ENCODE measurements at regions of chr10 and their contacts with region 1.

Region 1: GRCh38 chr10:100518761-100519241 is 860 bp downstream of the SEC31B start:
- DNase-seq: peak; percentile 76
- H3K4me3 Mint-ChIP-seq: no peak overlapping the region
- H3K27ac Mint-ChIP-seq: peak overlapping the region; percentile 11
- H3K4me1 Mint-ChIP-seq: peaks cover 12% of the 10 kb centered on the region
- H3K27me3 Mint-ChIP-seq: no peaks in the 10 kb centered on the region

Region 2: DNA sequence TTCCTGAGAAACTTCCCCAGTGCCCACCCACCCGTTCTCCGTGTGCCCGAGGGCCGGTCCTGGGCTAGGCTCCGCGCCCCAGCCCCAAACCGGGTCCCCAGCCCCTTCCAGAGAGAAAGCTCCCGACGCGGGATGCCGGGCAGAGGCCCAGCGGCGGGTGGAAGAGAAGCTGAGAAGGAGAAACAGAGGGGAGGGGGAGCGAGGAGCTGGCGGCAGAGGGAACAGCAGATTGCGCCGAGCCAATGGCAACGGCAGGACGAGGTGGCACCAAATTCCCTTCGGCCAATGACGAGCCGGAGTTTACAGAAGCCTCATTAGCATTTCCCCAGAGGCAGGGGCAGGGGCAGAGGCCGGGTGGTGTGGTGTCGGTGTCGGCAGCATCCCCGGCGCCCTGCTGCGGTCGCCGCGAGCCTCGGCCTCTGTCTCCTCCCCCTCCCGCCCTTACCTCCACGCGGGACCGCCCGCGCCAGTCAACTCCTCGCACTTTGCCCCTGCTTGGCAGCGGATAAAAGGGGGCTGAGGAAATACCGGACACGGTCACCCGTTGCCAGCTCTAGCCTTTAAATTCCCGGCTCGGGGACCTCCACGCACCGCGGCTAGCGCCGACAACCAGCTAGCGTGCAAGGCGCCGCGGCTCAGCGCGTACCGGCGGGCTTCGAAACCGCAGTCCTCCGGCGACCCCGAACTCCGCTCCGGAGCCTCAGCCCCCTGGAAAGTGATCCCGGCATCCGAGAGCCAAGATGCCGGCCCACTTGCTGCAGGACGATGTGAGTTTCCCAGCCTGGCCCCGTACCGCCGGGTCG is 171.8 kb before region 1 on chr10 and contains the start of gene SCD:
- CTCF ChIA-PET with region 1: interaction called, 17 read pairs
- POLR2A ChIA-PET with region 1: interaction called, 4 read pairs
- intact Hi-C with region 1: no loop called
- DNase-seq: peak; percentile 93
- H3K4me3 Mint-ChIP-seq: peak within 1 kb of the TSS; percentile 87
- H3K27ac Mint-ChIP-seq: peak within 1 kb of the TSS; percentile 81
- H3K4me1 Mint-ChIP-seq: peaks cover 39% of the 10 kb centered on the region
- H3K27me3 Mint-ChIP-seq: peaks cover 2% of the 10 kb centered on the region
- total RNA-seq, gene SCD: 156 to 158 TPM

Region 3: GRCh38 chr10:100438674-100439315 is 80.0 kb before region 1 on chr10:
- CTCF ChIA-PET with region 1: interaction called, 85 read pairs
- POLR2A ChIA-PET with region 1: no interaction called
- intact Hi-C with region 1: loop called (anchors 1 kb)
- DNase-seq: no peak
- H3K4me3 Mint-ChIP-seq: no peak overlapping the region
- H3K27ac Mint-ChIP-seq: no peak overlapping the region
- H3K4me1 Mint-ChIP-seq: peaks cover 2% of the 10 kb centered on the region
- H3K27me3 Mint-ChIP-seq: no peaks in the 10 kb centered on the region

Region 4: GRCh38 chr10:100529475-100530298 is 10.9 kb after region 1 on chr10 and contains the start of gene NDUFB8:
- CTCF ChIA-PET with region 1: interaction called, 47 read pairs
- POLR2A ChIA-PET with region 1: no interaction called
- intact Hi-C with region 1: no loop called
- DNase-seq: peak; percentile 92
- H3K4me3 Mint-ChIP-seq: peak within 1 kb of the TSS; percentile 100
- H3K27ac Mint-ChIP-seq: peak within 1 kb of the TSS; percentile 96
- H3K4me1 Mint-ChIP-seq: peaks cover 33% of the 10 kb centered on the region
- H3K27me3 Mint-ChIP-seq: no peaks in the 10 kb centered on the region
- total RNA-seq, gene NDUFB8: 390 to 404 TPM

Region 5: DNA sequence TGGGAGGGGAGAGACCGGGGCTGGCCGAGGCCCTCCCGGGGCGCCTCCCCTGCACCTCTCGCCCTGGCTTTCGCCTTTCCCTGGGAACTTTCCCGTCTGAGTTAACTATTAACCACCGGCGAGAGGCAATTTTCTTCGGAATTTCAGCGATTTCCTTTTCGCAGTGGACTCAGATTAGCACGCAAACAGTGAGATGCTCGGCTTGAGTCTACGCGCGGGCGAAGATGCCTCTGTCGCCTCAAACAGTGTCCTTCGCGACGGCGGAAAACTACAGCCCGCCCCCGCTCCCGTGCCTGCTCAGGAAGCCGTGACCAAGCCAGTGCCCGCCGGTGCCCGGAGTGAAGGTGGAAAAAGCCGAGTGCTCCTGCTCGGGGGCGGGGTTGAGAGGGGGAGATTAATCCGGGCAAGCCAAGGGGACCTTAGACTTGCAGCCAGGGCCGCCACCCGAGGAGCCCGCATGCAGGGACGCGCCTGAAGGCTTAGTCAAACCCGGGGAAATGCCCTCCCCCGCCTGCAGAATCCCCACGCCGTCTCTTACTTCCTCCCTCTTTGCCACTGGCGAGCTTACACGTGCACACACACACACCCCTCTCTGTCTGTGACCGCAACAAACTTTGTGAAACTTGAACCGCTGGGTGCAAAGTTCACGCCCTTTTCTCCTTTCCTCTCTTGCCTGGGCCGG is 212.1 kb after region 1 on chr10:
- CTCF ChIA-PET with region 1: no interaction called
- POLR2A ChIA-PET with region 1: no interaction called
- intact Hi-C with region 1: no loop called
- DNase-seq: peak; percentile 67
- H3K4me3 Mint-ChIP-seq: peak overlapping the region; percentile 14
- H3K27ac Mint-ChIP-seq: no peak overlapping the region
- H3K4me1 Mint-ChIP-seq: peaks cover 29% of the 10 kb centered on the region
- H3K27me3 Mint-ChIP-seq: peaks cover 82% of the 10 kb centered on the region